Endothelial cell of umbilical vein (primary cell): ENCODE measurements at regions of chr14 and their contacts with region 1.

Region 1: DNA sequence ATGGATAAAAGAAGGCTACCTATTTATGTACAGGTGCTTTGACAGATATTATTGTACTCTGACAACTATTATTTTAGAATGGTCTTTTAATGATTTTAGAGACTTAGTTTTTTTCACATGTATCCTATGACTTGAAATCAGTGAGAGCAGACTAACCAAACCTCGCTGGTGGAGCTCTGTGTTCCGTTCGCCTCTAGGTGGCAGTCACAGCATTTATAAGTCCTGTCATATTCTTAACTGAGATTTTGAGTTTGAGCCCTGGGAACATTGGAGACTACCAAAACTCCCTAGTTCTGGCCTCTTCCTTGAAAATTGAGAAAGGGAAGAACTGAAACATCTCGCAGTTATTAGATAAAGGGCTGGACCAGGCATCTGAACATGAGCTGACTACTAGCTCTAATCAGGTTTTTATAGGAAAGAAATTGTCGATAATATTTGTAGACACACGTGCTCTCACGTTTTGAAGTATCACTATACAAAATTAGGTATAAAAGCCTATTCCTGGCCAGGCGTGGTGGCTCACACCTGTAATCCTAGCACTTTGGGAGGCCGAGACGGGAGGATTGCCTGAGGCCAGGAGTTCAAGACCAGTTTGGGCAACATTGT is 48.3 kb downstream of the TTLL5 start:
- DNase-seq: peak; percentile 79
- H3K4me3 ChIP-seq: no peak overlapping the region
- H3K27ac ChIP-seq: no peak overlapping the region
- H3K4me1 ChIP-seq: no peaks in the 10 kb centered on the region
- H3K27me3 ChIP-seq: no peaks in the 10 kb centered on the region
- CTCF ChIP-seq: peak; percentile 72 to 75
- POLR2A ChIP-seq: no peak

Region 2: DNA sequence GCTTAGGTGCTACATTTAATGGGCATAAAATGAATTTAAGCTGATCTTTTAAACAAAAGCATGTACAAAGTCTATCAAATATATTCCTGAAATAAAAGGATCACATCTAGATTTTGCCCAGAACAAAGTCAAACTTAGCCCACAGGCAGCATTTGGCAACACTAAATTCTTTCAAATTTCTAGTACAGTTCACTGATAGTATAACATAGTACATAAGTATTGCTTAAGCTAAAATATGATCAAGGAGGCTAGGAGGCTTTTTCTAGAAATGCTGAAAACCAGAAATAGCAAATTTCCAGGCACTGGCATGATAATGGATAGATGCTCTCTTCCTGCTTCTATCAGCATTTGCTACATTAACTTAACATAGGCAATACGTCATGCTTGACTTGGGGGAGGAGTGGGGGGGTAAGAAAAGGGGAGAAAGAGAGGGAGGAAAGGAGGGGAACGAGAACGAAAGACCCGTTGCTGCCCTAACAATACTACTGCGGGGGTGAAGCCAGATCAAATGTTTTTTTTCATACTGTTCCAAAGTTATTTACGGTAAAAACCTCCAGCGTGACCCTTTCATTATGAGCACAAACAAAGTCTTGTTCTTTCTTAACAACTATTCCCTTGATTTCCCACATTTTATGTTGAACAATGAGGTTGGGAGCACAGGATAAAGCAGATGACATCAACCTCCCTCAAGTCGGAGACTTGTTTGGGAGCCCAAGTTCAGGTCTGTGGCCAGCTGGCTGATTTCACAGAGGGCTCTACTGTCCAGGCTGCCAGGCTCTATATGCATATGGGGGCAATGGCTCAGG is 543.5 kb before region 1 on chr14:
- CTCF ChIA-PET with region 1: no interaction called
- POLR2A ChIA-PET with region 1: no interaction called
- dilution Hi-C with region 1: no loop called
- intact Hi-C with region 1: no loop called
- DNase-seq: no peak
- H3K4me3 ChIP-seq: no peak overlapping the region
- H3K27ac ChIP-seq: no peak overlapping the region
- H3K4me1 ChIP-seq: peaks cover 3% of the 10 kb centered on the region
- H3K27me3 ChIP-seq: no peaks in the 10 kb centered on the region
- CTCF ChIP-seq: no peak
- POLR2A ChIP-seq: no peak

Region 3: DNA sequence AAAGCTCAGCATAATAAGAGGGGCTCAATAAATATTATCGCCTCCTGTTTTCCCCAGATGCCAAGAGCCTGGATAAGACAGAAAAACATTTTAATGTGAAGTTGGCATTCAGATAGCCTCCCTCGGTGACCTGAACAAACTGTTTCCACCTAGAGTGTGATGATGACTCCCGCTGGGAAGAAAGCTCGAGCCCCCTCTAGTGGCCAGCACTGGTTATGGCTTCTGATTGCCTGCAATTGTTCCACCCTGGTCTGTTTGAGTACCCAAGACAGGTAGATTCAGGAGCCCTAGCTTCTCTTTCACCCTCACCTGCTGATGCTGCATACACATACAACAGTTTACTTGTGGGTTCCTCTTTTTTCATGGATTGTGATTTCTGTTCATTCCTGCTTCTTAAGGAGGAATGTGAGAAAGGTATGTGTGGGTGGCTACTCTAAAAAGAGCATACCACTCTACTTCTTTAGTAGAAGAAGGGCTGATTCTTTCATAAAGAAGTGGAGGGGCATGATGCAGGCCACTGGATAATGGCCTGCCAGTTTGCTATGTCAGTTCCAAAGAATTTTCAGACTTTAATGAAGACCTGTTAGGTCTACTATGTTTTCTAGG is 55.1 kb before region 1 on chr14:
- CTCF ChIA-PET with region 1: interaction called, 11 read pairs
- POLR2A ChIA-PET with region 1: no interaction called
- dilution Hi-C with region 1: no loop called
- intact Hi-C with region 1: no loop called
- DNase-seq: peak; percentile 77
- H3K4me3 ChIP-seq: no peak overlapping the region
- H3K27ac ChIP-seq: no peak overlapping the region
- H3K4me1 ChIP-seq: peaks cover 6% of the 10 kb centered on the region
- H3K27me3 ChIP-seq: no peaks in the 10 kb centered on the region
- CTCF ChIP-seq: peak; percentile 92 to 94
- POLR2A ChIP-seq: no peak

Region 4: GRCh38 chr14:75738192-75738591 is 28.9 kb after region 1 on chr14:
- CTCF ChIA-PET with region 1: interaction called, 11 read pairs
- POLR2A ChIA-PET with region 1: no interaction called
- dilution Hi-C with region 1: no loop called
- intact Hi-C with region 1: no loop called
- DNase-seq: peak; percentile 19
- H3K4me3 ChIP-seq: no peak overlapping the region
- H3K27ac ChIP-seq: no peak overlapping the region
- H3K4me1 ChIP-seq: no peaks in the 10 kb centered on the region
- H3K27me3 ChIP-seq: no peaks in the 10 kb centered on the region
- CTCF ChIP-seq: no peak
- POLR2A ChIP-seq: no peak

Region 5: GRCh38 chr14:75989134-75989533 is 279.8 kb after region 1 on chr14:
- CTCF ChIA-PET with region 1: interaction called, 617 read pairs
- POLR2A ChIA-PET with region 1: no interaction called
- dilution Hi-C with region 1: loop called (anchors 25 kb)
- intact Hi-C with region 1: no loop called
- DNase-seq: peak; percentile 97
- H3K4me3 ChIP-seq: no peak overlapping the region
- H3K27ac ChIP-seq: peak overlapping the region; percentile 92
- H3K4me1 ChIP-seq: peaks cover 39% of the 10 kb centered on the region
- H3K27me3 ChIP-seq: no peaks in the 10 kb centered on the region
- CTCF ChIP-seq: no peak
- POLR2A ChIP-seq: no peak

Region 6: DNA sequence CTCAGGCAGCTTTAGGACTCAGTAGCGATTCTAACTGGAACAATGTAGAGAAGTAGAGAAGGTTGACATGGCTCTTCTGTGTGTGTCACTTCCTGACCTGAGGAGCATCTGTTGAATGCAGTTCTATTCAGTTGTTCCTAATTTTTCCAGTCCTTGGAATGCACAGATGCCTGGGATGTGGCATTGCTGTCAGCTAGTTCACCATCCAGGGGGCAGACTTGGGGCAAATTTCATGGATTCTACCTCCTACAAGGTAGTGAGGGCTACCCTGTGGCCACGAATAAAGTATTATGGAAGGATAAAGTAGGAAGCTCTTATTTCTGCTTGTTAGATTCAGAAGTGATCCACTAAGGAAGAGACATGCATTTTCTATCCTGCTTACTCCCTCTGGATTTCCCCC is 368.0 kb after region 1 on chr14:
- CTCF ChIA-PET with region 1: no interaction called
- POLR2A ChIA-PET with region 1: no interaction called
- dilution Hi-C with region 1: no loop called
- intact Hi-C with region 1: no loop called
- DNase-seq: no peak
- H3K4me3 ChIP-seq: no peak overlapping the region
- H3K27ac ChIP-seq: no peak overlapping the region
- H3K4me1 ChIP-seq: no peaks in the 10 kb centered on the region
- H3K27me3 ChIP-seq: no peaks in the 10 kb centered on the region
- CTCF ChIP-seq: no peak
- POLR2A ChIP-seq: no peak

Region 7: GRCh38 chr14:76090616-76091391 is 381.5 kb after region 1 on chr14:
- CTCF ChIA-PET with region 1: interaction called, 14 read pairs
- POLR2A ChIA-PET with region 1: no interaction called
- dilution Hi-C with region 1: no loop called
- intact Hi-C with region 1: loop called (anchors 2 kb)
- DNase-seq: peak; percentile 13
- H3K4me3 ChIP-seq: no peak overlapping the region
- H3K27ac ChIP-seq: no peak overlapping the region
- H3K4me1 ChIP-seq: no peaks in the 10 kb centered on the region
- H3K27me3 ChIP-seq: peaks cover 0 to 2% of the 10 kb centered on the region in 2 experiments
- CTCF ChIP-seq: peak; percentile 19 to 49
- POLR2A ChIP-seq: no peak